ENCODE measurements at regions of chr4 and their contacts with region 1.

Region 1: GRCh38 chr4:186037692-186038658 is 31.0 kb upstream of the TLR3 start:
- DNase-seq: peak; percentile 69
- CTCF ChIP-seq: peak; percentile 75

Region 2: DNA sequence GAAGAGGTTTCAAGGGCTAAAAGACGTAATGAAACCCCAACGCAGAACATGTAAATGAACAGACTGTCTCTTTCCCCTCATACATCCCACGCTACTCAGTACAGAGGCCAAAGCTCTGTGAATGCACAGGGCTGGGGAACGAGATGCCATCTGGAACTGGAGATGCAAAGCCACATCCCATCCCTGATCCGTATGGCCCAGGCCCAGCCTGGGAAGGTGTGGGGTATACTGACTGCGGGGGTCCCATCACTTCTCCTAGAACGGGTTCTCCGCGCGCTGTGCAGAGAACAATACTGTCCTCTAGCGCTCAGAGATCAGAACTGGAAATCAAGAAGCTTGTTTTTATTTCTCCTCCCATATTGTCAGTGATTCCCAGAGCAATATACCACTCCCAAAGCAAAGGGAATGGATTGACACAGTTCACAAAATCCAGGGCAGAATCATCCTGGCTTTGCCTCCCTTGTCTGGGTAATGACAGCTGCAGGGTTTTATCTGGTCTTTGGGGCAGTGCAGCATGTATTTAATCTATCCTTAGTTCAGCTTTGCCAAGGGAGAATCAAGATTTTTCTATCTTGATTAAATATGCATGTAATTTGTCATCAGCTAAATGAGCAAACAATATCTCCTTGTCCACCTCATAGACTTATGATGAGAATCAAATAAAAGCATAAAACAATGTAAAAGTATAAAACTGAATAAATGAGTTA is 16.4 kb before region 1 on chr4:
- CTCF ChIA-PET with region 1: interaction called, 50 read pairs
- POLR2A ChIA-PET with region 1: no interaction called
- DNase-seq: peak; percentile 38
- CTCF ChIP-seq: peak; percentile 58

Measured in GM10248 (cell line).